Activated T-helper 2 cell treated with anti-CD3 and anti-CD28 coated beads, Interferon-gamma antibody, Interleukin-2, Interleukin-4, amounts not matched to agents 10 μg/mL and 5 μg/mL and 100 μg/mL, durations not matched to agents 14 hours and 24 hours and 36 hours (primary cell): ENCODE measurements at regions of chr19 and their contacts with region 1.

Region 1: GRCh38 chr19:38831142-38831605 is 420 bp downstream of the ECH1 start:
- DNase-seq: peak; percentile 35
- H3K4me3 Mint-ChIP-seq: peak overlapping the region; percentile 90
- H3K27ac Mint-ChIP-seq: peak overlapping the region; percentile 98
- H3K4me1 Mint-ChIP-seq: peaks cover 21% of the 10 kb centered on the region
- H3K27me3 Mint-ChIP-seq: no peaks in the 10 kb centered on the region

Region 2: DNA sequence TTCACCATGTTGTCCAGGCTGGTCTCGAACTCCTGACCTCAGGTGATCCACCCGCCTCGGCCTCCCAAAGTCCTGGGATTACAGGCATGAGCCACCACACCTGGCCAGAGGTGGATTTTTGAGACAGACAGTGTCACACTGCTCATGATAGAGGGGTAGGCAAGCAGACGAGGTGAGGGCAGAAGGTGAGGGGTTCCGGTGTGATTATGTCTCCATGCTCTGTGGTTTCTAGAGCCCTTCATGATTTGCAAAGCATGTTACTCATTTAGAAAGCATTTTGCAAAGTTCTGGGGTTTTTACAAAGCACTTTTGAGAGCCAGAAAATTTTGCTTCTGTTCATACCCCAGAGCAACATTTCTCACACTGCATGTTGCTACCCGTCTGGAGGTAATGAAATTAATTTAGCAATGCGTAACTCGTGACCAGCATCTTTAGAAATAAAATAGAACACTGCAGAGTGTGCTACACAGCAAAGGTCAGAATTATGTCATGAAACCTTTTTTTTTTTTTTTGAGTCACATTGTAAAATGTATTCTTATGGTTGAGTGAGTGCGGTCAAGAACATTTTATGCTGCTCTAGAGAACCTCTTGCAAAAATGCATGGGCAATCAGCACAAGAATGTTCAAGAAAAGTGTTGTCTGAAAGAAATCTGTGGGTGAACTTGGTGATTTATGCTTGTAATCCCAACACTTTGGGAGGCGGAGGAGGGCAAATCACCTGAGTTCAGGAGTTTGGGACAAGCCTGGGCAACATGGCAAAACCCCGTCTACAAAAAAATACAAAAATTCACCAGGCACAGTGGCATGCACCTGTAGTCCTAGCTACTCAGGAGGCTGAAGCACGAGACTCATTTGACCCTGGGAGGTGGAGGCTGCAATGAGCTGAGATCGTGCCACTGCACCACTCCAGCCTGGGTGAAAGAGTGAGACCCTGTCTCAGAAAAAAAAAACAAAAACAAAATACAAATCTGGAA is 271.5 kb before region 1 on chr19:
- intact Hi-C with region 1: loop called (anchors 10 kb)
- DNase-seq: peak; percentile 42
- H3K4me3 Mint-ChIP-seq: peak overlapping the region; percentile 56
- H3K27ac Mint-ChIP-seq: peak overlapping the region; percentile 81
- H3K4me1 Mint-ChIP-seq: peaks cover 43% of the 10 kb centered on the region
- H3K27me3 Mint-ChIP-seq: peaks cover 3% of the 10 kb centered on the region

Region 3: GRCh38 chr19:38736413-38737280 is 94.5 kb before region 1 on chr19:
- intact Hi-C with region 1: loop called (anchors 5 kb)
- DNase-seq: no peak
- H3K4me3 Mint-ChIP-seq: peak overlapping the region; percentile 66
- H3K27ac Mint-ChIP-seq: peak overlapping the region; percentile 38
- H3K4me1 Mint-ChIP-seq: peaks cover 38% of the 10 kb centered on the region
- H3K27me3 Mint-ChIP-seq: peaks cover 6% of the 10 kb centered on the region

Region 4: DNA sequence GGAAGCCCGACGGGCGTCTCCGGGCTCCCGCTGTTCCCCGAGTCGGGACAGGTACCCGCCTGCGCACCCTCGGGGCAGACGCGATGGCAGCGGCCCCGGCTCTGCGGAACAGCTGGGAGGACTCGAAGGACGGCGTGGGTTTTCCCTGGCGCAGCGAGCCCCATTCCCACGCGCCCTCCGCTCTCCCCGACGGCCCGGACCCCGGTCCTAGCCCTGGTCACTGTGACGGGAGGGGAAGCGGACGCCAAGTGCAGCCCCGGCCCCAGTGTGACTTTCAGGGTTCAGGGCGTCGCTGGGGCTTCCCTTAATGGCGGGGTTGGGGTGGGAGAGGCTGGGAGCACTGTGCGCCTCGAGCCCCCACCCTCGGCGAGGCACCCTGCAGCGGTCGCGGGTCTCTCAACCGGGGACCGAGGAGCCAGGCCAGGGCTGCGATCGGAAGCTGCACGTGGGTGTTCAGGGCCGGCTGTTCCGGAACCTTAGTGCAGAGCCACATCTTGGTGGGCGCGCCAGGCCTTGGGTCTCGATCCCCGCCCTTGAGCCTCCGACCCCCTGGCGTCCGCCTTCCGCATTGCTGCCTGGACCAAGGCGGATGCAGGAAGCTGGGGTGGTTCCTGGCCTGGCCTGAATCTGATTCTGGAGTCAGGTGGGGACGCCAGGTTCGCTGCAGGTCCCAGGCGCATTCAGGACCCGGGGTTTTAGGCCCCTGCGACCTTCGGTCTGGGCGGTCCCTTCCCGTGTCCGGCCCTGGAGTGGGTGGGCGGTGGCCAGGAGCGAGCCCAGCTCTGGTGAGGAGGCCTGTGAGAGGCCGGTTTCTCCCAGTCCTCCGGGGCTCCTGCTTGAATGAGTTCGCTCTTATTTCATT is 38.7 kb before region 1 on chr19:
- intact Hi-C with region 1: no loop called
- DNase-seq: peak; percentile 16
- H3K4me3 Mint-ChIP-seq: peak overlapping the region; percentile 42
- H3K27ac Mint-ChIP-seq: peak overlapping the region; percentile 64
- H3K4me1 Mint-ChIP-seq: peaks cover 4% of the 10 kb centered on the region
- H3K27me3 Mint-ChIP-seq: peaks cover 9% of the 10 kb centered on the region

Region 5: GRCh38 chr19:38899447-38900219 is 68.5 kb after region 1 on chr19 and contains the starts of genes NFKBIB and SIRT2:
- intact Hi-C with region 1: loop called (anchors 1 kb)
- DNase-seq: peak; percentile 100
- H3K4me3 Mint-ChIP-seq: peak within 1 kb of the TSS; percentile 90
- H3K27ac Mint-ChIP-seq: peak within 1 kb of the TSS; percentile 85
- H3K4me1 Mint-ChIP-seq: peaks cover 15% of the 10 kb centered on the region
- H3K27me3 Mint-ChIP-seq: no peaks in the 10 kb centered on the region
- total RNA-seq, gene NFKBIB: 81.8 and 82.7 TPM in 2 replicates
- total RNA-seq, gene SIRT2: 29.0 and 30.2 TPM in 2 replicates

Region 6: DNA sequence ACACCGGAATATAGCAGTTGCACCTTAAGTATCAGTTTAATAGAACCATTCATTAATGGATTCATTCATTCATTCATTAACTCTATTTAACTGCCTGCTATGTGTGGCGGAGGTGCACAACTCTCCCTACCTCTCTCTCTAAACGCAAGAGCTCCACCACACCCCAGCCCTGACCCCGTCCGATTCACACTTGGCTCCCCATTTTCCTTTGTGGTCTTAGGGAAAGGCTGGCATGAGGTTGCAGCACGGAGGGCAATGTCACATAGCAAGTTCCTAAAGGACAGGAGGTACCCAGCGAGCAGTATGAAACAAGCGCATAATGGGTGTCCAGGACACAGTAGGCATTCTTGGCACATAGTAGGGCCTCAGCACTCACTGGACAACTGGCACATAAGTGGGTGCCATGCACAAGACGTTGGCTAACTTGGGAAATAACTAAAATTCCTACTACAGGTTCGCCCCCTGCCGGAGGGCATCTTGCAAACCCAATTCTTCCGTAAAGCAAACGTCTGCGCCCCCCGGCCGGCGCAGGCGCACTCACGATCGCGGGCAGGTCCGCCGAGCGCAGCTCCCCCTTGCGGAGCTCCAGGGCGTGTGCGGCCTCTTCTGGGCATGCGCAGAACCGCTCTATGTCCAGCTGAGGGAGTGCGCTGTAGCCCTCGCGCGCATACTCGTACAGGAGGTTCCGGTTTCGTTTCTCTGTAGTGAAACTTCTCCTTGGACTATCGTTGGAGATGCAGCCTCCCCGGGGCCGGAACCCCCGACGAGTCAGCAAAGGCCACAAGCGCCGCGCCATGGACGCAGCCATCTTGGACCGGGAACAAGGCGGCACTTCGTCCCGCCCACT is 99.0 kb after region 1 on chr19 and contains the start of gene SARS2:
- intact Hi-C with region 1: loop called (anchors 1 kb)
- DNase-seq: peak; percentile 92
- H3K4me3 Mint-ChIP-seq: peak within 1 kb of the TSS; percentile 94
- H3K27ac Mint-ChIP-seq: peak within 1 kb of the TSS; percentile 97
- H3K4me1 Mint-ChIP-seq: peaks cover 29% of the 10 kb centered on the region
- H3K27me3 Mint-ChIP-seq: no peaks in the 10 kb centered on the region
- total RNA-seq, gene SARS2: 41.1 and 45.2 TPM in 2 replicates